Right ventricle myocardium inferior (tissue), 1 donor: ENCODE measurements at regions of chr6 and their contacts with region 1.

Region 1: GRCh38 chr6:141169419-141169818 is 963.3 kb upstream of the GJE1 start:
- DNase-seq: no peak
- ATAC-seq: no peak

Region 2: DNA sequence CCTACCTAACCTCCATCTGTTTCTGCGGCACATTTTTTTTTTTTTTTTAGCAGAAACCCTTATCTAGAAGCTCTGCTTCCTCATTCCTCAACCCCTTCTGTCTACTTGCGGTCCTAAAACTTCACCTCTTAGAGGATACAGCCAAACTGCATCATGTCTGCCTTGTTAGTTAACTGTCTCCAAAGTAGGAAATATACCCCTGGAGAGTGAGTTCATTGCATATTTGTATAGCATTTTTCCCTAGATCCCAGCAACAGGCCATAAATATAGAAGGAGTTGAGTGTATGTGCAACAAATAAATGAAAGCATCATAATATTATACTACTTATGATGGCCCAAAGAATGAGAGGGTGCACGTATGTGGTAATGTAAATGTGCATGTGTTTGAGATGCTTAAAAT is 325.3 kb before region 1 on chr6:
- intact Hi-C with region 1: no loop called
- DNase-seq: no peak
- ATAC-seq: no peak

Region 3: DNA sequence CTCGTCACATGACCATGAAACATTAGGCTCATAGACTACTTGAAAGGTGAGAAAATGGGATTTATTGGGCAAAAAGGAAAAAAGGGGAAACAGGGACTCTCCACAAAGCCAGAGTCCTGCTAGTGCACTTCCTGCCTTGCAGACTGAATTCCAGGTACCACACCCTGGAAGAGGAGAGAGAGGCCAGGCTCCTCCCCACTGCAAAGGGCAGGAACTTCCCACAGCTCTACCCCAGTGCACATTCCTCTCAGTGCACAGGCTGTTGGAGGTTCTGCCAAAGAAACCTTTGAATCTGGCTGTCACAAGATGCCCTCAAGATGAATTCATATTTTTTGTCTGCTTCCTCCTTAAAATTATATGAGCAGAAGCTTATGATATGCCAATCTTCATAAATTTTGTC is 42.9 kb after region 1 on chr6:
- intact Hi-C with region 1: no loop called
- DNase-seq: no peak
- ATAC-seq: no peak

Region 4: GRCh38 chr6:141252828-141253608 is 83.6 kb after region 1 on chr6:
- intact Hi-C with region 1: loop called (anchors 10 kb)
- DNase-seq: no peak
- ATAC-seq: peak; percentile 52

Region 5: GRCh38 chr6:141359953-141360352 is 190.5 kb after region 1 on chr6:
- intact Hi-C with region 1: loop called (anchors 10 kb)
- DNase-seq: no peak
- ATAC-seq: peak; percentile 91